K562 (cell line): ENCODE measurements at regions of chr11 and their contacts with region 1.

Region 1: GRCh38 chr11:14300661-14301304 is 58.2 kb downstream of the RRAS2 start:
- DNase-seq: peak; percentile 36 to 74 (median 59)
- ATAC-seq: peak; percentile 98
- H3K4me3 ChIP-seq: no peak overlapping the region
- H3K27ac ChIP-seq: no peak overlapping the region
- H3K4me1 ChIP-seq: no peaks in the 10 kb centered on the region; a peak in 1 of 5 replicates
- H3K27me3 ChIP-seq: no peaks in the 10 kb centered on the region
- CTCF ChIP-seq: peak; percentile 74 to 87 (median 79)
- EP300 ChIP-seq: no peak
- POLR2A ChIP-seq: no peak
- RAD21 ChIP-seq: peak; percentile 83 to 93

Region 2: DNA sequence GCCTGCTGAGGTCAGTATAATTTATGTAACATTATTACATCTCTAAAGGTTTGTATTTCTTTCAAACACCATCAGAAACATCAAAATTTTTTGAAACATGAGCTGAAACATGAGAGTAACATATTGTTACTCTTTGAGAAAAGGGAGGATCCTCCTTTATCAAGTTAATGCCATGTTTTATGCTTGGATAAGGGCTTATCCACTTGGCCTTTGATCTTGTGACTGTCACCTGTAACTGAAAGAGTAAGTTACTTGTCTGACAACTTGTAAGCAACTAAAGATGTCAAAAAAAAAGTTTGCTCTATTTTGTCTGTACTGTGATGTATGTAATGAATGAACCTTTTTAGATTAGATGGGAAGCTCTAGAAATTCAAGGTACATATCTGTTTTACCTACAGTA is 572.7 kb before region 1 on chr11:
- CTCF ChIA-PET with region 1: no interaction called
- POLR2A ChIA-PET with region 1: no interaction called
- in situ Hi-C with region 1: no loop called
- intact Hi-C with region 1: no loop called
- DNase-seq: no peak
- ATAC-seq: no peak
- H3K4me3 ChIP-seq: no peak overlapping the region
- H3K27ac ChIP-seq: no peak overlapping the region
- H3K4me1 ChIP-seq: no peaks in the 10 kb centered on the region; a peak in 1 of 5 replicates
- H3K27me3 ChIP-seq: no peaks in the 10 kb centered on the region
- CTCF ChIP-seq: no peak
- EP300 ChIP-seq: no peak
- POLR2A ChIP-seq: no peak
- RAD21 ChIP-seq: no peak

Region 3: GRCh38 chr11:14059491-14059890 is 241.3 kb before region 1 on chr11:
- CTCF ChIA-PET with region 1: no interaction called
- POLR2A ChIA-PET with region 1: no interaction called
- in situ Hi-C with region 1: no loop called
- intact Hi-C with region 1: no loop called
- DNase-seq: no peak
- ATAC-seq: no peak
- H3K4me3 ChIP-seq: no peak overlapping the region
- H3K27ac ChIP-seq: no peak overlapping the region
- H3K4me1 ChIP-seq: no peaks in the 10 kb centered on the region
- H3K27me3 ChIP-seq: peaks cover 0 to 9% of the 10 kb centered on the region in 2 experiments; a peak in 2 of 5 replicates
- CTCF ChIP-seq: no peak
- EP300 ChIP-seq: no peak
- POLR2A ChIP-seq: no peak
- RAD21 ChIP-seq: no peak

Region 4: GRCh38 chr11:14386895-14387480 is 86.2 kb after region 1 on chr11:
- CTCF ChIA-PET with region 1: no interaction called
- POLR2A ChIA-PET with region 1: no interaction called
- in situ Hi-C with region 1: no loop called
- intact Hi-C with region 1: no loop called
- DNase-seq: peak in 1 of 4 experiments; percentile 30
- ATAC-seq: peak; percentile 38; the same call in 2 of the 3 replicates
- H3K4me3 ChIP-seq: no peak overlapping the region
- H3K27ac ChIP-seq: no peak overlapping the region
- H3K4me1 ChIP-seq: no peaks in the 10 kb centered on the region
- H3K27me3 ChIP-seq: peaks cover 20 to 23% of the 10 kb centered on the region in 2 experiments; a peak in 4 of 5 replicates
- CTCF ChIP-seq: no peak
- EP300 ChIP-seq: no peak
- POLR2A ChIP-seq: no peak
- RAD21 ChIP-seq: no peak

Region 5: GRCh38 chr11:14413307-14414069 is 112.7 kb after region 1 on chr11:
- CTCF ChIA-PET with region 1: interaction called, 12 read pairs
- POLR2A ChIA-PET with region 1: interaction called, 3 read pairs
- in situ Hi-C with region 1: loop called (anchors 10 kb)
- intact Hi-C with region 1: no loop called
- DNase-seq: peak; percentile 45 to 64 (median 55)
- ATAC-seq: peak; percentile 59
- H3K4me3 ChIP-seq: no peak overlapping the region
- H3K27ac ChIP-seq: no peak overlapping the region
- H3K4me1 ChIP-seq: peaks cover 10 to 22% of the 10 kb centered on the region in 2 experiments; a peak in 4 of 5 replicates
- H3K27me3 ChIP-seq: no peaks in the 10 kb centered on the region
- CTCF ChIP-seq: peak; percentile 30 to 55 (median 47); a peak in 5 of 6 replicates
- EP300 ChIP-seq: no peak
- POLR2A ChIP-seq: no peak
- RAD21 ChIP-seq: peak in 1 of 2 experiments; percentile 38; a peak in 1 of 4 replicates

Region 6: DNA sequence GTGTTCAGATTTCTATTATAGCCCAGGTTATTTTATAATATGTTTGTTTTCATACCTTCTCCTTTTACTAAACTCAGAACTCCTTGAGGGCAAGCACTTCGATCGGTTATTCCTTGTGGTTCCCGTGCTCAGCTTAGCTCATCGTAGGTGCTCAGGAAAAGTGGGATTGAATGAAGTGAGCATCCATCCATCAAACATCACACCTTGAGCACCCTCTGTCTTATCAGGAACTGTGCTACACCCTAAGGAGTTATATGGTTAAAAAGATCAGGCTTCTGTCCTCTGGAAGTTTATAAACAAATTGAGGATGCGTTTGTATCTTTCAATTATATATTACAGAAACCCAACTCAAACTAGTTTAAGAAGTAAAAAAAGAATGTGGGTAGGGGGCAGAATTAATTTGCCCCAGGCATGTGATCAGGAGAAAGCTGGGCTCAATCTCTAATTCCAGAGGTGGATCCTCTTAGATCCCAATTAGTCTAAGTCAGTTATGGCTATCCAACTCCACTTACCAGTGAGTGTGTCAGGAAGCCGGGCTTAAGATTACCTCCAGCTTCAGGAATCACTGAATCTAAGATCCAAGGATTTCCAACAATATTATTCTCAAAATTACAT is 118.1 kb after region 1 on chr11:
- CTCF ChIA-PET with region 1: interaction called, 12 read pairs
- POLR2A ChIA-PET with region 1: interaction called, 3 read pairs
- in situ Hi-C with region 1: loop called (anchors 10 kb)
- intact Hi-C with region 1: loop called (anchors 1 kb)
- DNase-seq: peak; percentile 42 to 51 (median 46)
- ATAC-seq: peak; percentile 56
- H3K4me3 ChIP-seq: no peak overlapping the region
- H3K27ac ChIP-seq: no peak overlapping the region
- H3K4me1 ChIP-seq: peaks cover 19 to 32% of the 10 kb centered on the region in 2 experiments
- H3K27me3 ChIP-seq: no peaks in the 10 kb centered on the region
- CTCF ChIP-seq: peak; percentile 57 to 75 (median 66)
- EP300 ChIP-seq: no peak
- POLR2A ChIP-seq: no peak
- RAD21 ChIP-seq: peak; percentile 32 to 77

Region 7: DNA sequence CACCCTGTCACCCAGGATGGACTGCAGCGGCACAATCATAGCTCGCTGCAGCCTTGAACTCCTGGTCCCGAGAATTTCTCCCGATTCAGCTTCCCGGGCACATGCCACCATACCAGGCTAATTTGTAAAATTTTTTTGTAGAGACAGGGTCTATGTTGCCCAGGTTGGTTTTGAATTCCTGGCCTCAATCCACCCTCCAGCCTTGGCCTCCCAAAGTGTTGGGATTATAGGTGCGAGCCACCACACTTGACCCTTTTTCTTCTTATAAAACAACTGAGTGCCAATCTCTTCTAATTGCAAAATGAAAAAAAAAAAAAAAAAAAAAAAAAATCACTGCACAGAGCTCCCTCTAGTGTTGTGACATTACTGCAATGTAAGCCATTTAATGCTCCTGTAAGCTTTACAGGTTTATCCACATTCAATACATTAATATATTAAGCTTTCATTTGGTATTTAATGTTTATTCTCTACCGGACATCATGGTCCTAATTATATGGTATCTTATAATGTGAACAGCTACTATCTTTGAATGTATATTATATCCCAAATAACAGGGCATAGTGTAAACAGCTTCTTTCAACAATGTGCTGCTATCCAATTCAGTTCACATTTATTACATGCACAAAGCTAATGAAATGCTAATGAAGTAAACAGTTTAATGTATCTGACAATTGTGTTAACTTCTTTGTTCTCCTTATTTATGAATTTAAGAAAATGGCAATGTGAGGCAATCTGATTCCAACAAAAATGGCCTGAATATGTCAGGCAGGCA is 154.3 kb after region 1 on chr11:
- CTCF ChIA-PET with region 1: interaction called, 15 read pairs
- POLR2A ChIA-PET with region 1: interaction called, 13 read pairs
- in situ Hi-C with region 1: loop called (anchors 10 kb)
- intact Hi-C with region 1: loop called (anchors 2 kb)
- DNase-seq: peak; percentile 10 to 17 (median 16)
- ATAC-seq: peak; percentile 68
- H3K4me3 ChIP-seq: no peak overlapping the region
- H3K27ac ChIP-seq: no peak overlapping the region
- H3K4me1 ChIP-seq: no peaks in the 10 kb centered on the region
- H3K27me3 ChIP-seq: no peaks in the 10 kb centered on the region
- CTCF ChIP-seq: peak; percentile 30 to 64 (median 42); a peak in 4 of 6 replicates
- EP300 ChIP-seq: no peak
- POLR2A ChIP-seq: no peak
- RAD21 ChIP-seq: peak; percentile 29 to 38